K562 (cell line): ENCODE measurements at regions of chr22 and their contacts with region 1.

Region 1: DNA sequence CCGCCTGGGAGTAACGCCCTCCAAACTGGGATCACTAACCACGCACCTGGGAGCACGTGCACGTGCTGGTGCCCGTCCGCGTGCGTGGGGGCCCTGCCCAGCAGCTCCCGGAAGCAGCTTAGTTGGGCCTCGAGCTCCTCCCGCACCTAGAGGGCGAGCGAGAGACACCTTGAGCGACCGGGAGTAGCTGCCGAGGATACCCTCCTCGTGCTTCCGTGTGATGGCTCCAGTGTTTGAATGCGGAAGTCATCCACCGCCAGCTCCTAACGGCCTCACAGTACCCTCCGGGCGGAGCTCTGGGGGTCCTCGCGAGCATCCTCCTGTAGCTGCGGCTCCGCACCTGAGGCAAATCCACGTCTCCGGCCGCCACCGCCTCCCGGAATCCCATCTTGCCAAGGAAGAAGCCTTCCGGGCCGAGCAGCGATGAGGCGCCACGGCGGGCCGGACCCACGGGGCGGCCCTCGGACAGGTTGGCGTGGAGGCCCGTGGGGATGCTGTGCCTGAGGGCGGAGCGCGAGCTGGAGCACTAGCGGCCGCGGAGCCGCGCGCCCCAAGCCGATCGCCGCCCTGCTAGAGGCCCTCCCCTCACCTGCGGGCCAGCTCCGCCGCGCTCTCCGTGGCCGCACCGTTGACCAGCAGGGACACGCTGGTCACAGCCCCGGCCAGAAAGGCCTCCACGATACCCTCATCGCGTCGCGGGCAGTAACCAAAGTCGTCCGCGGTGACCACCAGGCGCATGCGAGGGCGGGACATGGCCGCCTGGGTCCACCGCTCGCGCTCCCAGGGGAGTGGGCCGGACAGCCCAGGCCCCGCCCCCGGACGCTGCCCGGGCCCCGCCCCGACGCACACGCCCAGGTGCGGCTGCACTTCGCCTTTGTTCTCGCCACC is at the start of gene YDJC:
- DNase-seq: peak; percentile 100
- ATAC-seq: peak; percentile 83
- H3K4me3 ChIP-seq: peak within 1 kb of the TSS; percentile 59
- H3K27ac ChIP-seq: peak within 1 kb of the TSS; percentile 89
- H3K4me1 ChIP-seq: peaks cover 57 to 85% of the 10 kb centered on the region in 2 experiments
- H3K27me3 ChIP-seq: no peaks in the 10 kb centered on the region
- CTCF ChIP-seq: peak in 1 of 3 experiments; percentile 99; a peak in 2 of 6 replicates
- EP300 ChIP-seq: peak; percentile 90
- POLR2A ChIP-seq: no peak
- RAD21 ChIP-seq: no peak
- polyA plus RNA-seq, gene YDJC: 13.5 to 23.5 TPM

Region 2: DNA sequence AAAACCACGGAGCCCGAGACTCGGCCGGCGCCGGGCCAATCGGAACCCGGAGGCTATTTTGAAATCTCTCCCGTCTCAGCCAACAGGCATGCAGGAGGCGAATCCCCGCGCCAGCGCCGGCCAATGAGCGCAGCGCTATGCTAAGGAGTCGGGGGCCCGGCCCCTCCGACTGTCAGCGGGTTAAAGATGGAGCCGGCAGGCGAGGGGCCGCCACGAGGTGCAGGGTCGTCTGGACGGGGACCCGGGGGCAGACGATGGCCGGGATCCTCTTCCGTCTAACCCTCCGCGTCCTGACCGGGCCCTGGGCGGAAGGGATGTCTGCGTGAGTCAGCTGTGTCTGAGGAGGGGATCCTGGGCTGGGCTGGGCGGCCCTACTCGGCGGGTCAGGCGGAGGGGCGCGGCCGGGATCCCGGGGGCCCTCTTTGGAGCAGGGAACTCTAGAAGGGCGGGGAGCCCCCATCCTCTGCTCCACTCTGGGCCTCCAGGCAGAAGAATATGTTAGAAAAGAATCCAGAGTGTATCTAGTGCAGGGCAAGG is 22.6 kb after region 1 on chr22:
- CTCF ChIA-PET with region 1: interaction called, 99 read pairs
- POLR2A ChIA-PET with region 1: interaction called, 4,622 read pairs
- in situ Hi-C with region 1: no loop called
- intact Hi-C with region 1: loop called (anchors 1 kb)
- DNase-seq: peak; percentile 100
- ATAC-seq: peak; percentile 94
- H3K4me3 ChIP-seq: peak overlapping the region; percentile 47
- H3K27ac ChIP-seq: peak overlapping the region; percentile 69
- H3K4me1 ChIP-seq: peaks cover 35 to 42% of the 10 kb centered on the region in 2 experiments
- H3K27me3 ChIP-seq: no peaks in the 10 kb centered on the region
- CTCF ChIP-seq: no peak
- EP300 ChIP-seq: peak; percentile 33; the same call in 1 of the 2 replicates
- POLR2A ChIP-seq: no peak
- RAD21 ChIP-seq: no peak

Region 3: GRCh38 chr22:22316589-22316988 is 687.1 kb after region 1 on chr22:
- CTCF ChIA-PET with region 1: no interaction called
- POLR2A ChIA-PET with region 1: no interaction called
- in situ Hi-C with region 1: no loop called
- intact Hi-C with region 1: no loop called
- DNase-seq: no peak
- ATAC-seq: no peak
- H3K4me3 ChIP-seq: no peak overlapping the region
- H3K27ac ChIP-seq: no peak overlapping the region
- H3K4me1 ChIP-seq: no peaks in the 10 kb centered on the region
- H3K27me3 ChIP-seq: no peaks in the 10 kb centered on the region
- CTCF ChIP-seq: no peak
- EP300 ChIP-seq: no peak
- POLR2A ChIP-seq: no peak
- RAD21 ChIP-seq: no peak